Endothelial cell of umbilical vein (primary cell): ENCODE measurements at regions of chrX and their contacts with region 1.

Region 1: GRCh38 chrX:87583679-87584078 is 66.1 kb downstream of the KLHL4 start:
- DNase-seq: peak; percentile 33
- H3K4me3 ChIP-seq: no peak overlapping the region
- H3K27ac ChIP-seq: no peak overlapping the region
- H3K4me1 ChIP-seq: no peaks in the 10 kb centered on the region
- H3K27me3 ChIP-seq: no peaks in the 10 kb centered on the region
- CTCF ChIP-seq: peak; percentile 42 to 47
- POLR2A ChIP-seq: no peak

Region 2: DNA sequence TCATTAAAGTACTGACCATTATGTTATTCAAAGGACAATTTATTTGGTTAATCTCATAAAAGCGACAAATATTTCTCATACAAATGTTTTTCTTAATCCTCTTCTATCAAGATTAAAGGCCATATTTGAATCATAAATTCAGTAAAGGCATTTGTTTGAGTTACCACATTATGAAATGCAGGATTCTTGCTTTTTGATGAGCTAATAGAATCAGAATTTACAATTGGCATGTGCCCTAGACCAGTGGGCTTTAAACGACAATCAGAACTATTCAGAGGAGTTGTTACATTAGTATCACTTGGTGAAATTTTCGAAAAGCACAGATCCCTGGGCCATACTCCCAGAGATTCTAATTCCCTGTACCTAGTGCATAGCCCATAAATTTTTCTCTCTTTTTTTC is 10.8 kb before region 1 on chrX:
- CTCF ChIA-PET with region 1: interaction called, 15 read pairs
- POLR2A ChIA-PET with region 1: no interaction called
- dilution Hi-C with region 1: no loop called
- intact Hi-C with region 1: no loop called
- DNase-seq: no peak
- H3K4me3 ChIP-seq: no peak overlapping the region
- H3K27ac ChIP-seq: no peak overlapping the region
- H3K4me1 ChIP-seq: no peaks in the 10 kb centered on the region
- H3K27me3 ChIP-seq: no peaks in the 10 kb centered on the region
- CTCF ChIP-seq: no peak
- POLR2A ChIP-seq: no peak

Region 3: GRCh38 chrX:87732133-87732532 is 148.5 kb after region 1 on chrX:
- CTCF ChIA-PET with region 1: no interaction called
- POLR2A ChIA-PET with region 1: no interaction called
- dilution Hi-C with region 1: no loop called
- intact Hi-C with region 1: no loop called
- DNase-seq: no peak
- H3K4me3 ChIP-seq: no peak overlapping the region
- H3K27ac ChIP-seq: no peak overlapping the region
- H3K4me1 ChIP-seq: no peaks in the 10 kb centered on the region
- H3K27me3 ChIP-seq: no peaks in the 10 kb centered on the region
- CTCF ChIP-seq: no peak
- POLR2A ChIP-seq: no peak